ENCODE measurements at regions of chr14 and their contacts with region 1.

Region 1: DNA sequence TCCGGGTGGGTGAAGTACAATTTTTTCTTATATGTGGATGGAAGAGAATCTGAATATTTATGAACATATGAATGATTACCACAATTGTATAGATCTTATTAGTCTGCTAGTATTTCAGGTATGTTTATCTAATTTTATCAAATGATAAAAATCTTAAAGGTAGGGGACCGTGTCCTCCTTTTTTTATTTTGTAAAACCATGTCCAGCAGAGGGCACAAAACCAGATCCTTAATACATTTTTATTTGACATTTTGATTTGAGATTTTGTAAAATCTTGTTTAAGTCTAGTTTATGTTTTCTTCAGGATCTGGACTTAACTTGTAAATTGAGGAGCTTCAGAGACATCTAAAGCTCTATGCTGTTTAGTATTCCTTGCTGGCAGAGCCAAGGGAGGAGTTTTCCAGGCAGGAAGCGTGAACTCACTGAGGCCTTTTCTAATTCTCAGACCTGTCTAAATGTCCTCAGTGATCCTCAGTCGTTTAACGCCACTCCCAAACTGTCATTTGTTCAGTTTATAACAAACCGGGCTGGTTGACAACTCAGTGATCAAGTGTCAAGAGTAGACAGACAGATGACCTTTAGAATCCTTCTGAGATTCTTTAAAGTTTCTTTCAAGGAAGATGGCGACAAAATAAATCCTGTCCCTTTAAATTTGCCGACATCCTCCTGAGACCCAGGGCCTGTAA is 263.9 kb downstream of the KTN1 start:
- DNase-seq: no peak
- H3K4me3 ChIP-seq: no peak overlapping the region
- H3K27ac ChIP-seq: no peak overlapping the region
- H3K4me1 ChIP-seq: no peaks in the 10 kb centered on the region
- H3K27me3 ChIP-seq: no peaks in the 10 kb centered on the region
- CTCF ChIP-seq: no peak
- EP300 ChIP-seq: no peak
- POLR2A ChIP-seq: no peak
- RAD21 ChIP-seq: no peak

Region 2: DNA sequence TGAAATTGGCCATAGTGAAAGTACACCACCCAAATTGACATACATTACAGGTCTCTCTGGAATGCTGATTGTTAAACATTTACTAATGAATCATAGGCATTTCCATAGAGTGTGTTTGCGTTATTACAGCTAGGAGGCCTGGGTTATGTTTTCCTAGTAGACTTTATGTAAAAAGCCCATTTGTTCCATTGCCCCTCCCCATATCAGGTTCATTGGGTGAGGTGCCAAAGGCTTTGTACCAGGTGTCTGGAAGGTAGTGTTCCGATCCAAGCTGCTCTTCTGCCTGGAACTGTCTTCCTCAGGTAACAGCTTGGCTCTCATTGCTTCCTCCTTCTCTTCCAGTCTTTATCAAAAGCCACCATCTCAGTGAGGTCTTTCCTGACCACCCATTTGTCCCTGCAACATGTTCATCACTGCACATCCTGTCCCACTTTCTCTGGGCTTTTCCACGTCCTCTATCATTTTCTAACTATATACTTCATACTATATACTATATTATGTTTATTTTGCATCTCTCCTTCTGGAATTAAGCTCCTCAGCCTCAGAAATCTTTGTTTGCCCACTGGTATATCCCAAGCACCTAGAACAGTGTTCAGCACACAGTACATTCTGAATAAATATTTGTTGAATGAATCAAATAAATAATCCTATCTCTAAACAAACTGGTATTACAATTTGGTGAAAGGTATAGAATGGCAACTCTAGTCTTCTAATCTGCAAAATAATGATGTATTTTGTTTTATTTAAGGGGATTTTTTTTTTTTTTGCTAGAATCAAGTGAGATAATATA is 11.5 kb before region 1 on chr14:
- CTCF ChIA-PET with region 1: interaction called, 11 read pairs
- POLR2A ChIA-PET with region 1: interaction called, 3 read pairs
- DNase-seq: no peak
- H3K4me3 ChIP-seq: no peak overlapping the region
- H3K27ac ChIP-seq: no peak overlapping the region
- H3K4me1 ChIP-seq: no peaks in the 10 kb centered on the region
- H3K27me3 ChIP-seq: no peaks in the 10 kb centered on the region
- CTCF ChIP-seq: no peak
- EP300 ChIP-seq: no peak
- POLR2A ChIP-seq: no peak
- RAD21 ChIP-seq: no peak

Measured in H1 (cell line).